ENCODE measurements at regions of chr6 and their contacts with region 1.

Region 1: GRCh38 chr6:42901536-42901957 is 14.3 kb upstream of the PTCRA start:
- DNase-seq: peak in 1 of 2 donors; percentile 71
- ATAC-seq: peak; percentile 93
- H3K4me3 ChIP-seq: no peak overlapping the region
- H3K27ac ChIP-seq: no peak overlapping the region
- H3K4me1 ChIP-seq: no peaks in the 10 kb centered on the region
- H3K27me3 ChIP-seq: no peaks in the 10 kb centered on the region

Region 2: DNA sequence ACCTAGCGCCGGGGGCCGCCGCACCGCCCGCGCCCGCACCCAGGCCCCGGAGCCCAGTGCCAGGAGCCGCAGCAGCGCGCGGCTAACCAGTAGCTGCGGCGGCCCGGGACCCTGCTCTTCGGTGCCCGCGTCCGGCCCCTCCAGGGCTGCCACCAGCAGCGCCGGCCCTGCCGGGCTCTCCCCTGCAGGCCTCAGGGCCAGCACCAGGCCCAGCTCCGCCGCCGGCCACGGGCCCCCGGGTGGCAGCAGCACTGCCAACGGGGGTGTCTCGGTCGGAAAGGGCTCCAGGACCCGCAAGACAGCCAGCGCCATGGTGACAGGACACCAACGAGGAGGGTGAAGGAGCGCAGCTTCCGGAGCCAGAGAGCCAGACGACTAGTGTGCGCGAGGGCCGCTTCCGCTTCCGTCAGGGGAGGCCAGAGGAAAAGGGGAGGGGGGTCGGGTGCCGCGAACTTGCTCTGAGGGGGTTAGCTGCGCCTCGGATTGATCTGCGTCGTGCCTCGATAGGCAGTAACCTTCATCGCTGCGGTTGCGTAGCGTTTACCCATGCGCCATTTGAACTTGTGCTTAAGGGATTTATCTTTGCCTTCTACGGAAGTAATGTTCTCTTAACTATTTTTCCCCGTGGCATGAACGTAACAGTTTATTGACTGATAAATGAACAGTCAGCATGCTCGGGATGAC is 77.4 kb after region 1 on chr6 and contains the start of gene PEX6:
- intact Hi-C with region 1: no loop called
- DNase-seq: peak; percentile 95 to 97
- ATAC-seq: peak; percentile 94
- H3K4me3 ChIP-seq: peak within 1 kb of the TSS; percentile 66 to 80
- H3K27ac ChIP-seq: peak within 1 kb of the TSS; percentile 72 to 83
- H3K4me1 ChIP-seq: no peaks in the 10 kb centered on the region
- H3K27me3 ChIP-seq: no peaks in the 10 kb centered on the region
- total RNA-seq, gene PEX6: 11.7 to 16.1 TPM

Region 3: GRCh38 chr6:43129434-43130194 is 228.1 kb after region 1 on chr6:
- intact Hi-C with region 1: loop called (anchors 2 to 5 kb)
- DNase-seq: no peak
- ATAC-seq: peak; percentile 70
- H3K4me3 ChIP-seq: no peak overlapping the region
- H3K27ac ChIP-seq: no peak overlapping the region
- H3K4me1 ChIP-seq: no peaks in the 10 kb centered on the region
- H3K27me3 ChIP-seq: no peaks in the 10 kb centered on the region

Region 4: GRCh38 chr6:43143235-43144124 is 241.9 kb after region 1 on chr6:
- intact Hi-C with region 1: loop called (anchors 2 to 5 kb)
- DNase-seq: peak; percentile 91 to 95
- ATAC-seq: peak; percentile 96
- H3K4me3 ChIP-seq: no peak overlapping the region
- H3K27ac ChIP-seq: no peak overlapping the region
- H3K4me1 ChIP-seq: no peaks in the 10 kb centered on the region
- H3K27me3 ChIP-seq: no peaks in the 10 kb centered on the region